Activated naive CD4-positive, alpha-beta T cell treated with anti-CD3 and anti-CD28 coated beads for 36 hours (primary cell): ENCODE measurements at regions of chr14 and their contacts with region 1.

Region 1: DNA sequence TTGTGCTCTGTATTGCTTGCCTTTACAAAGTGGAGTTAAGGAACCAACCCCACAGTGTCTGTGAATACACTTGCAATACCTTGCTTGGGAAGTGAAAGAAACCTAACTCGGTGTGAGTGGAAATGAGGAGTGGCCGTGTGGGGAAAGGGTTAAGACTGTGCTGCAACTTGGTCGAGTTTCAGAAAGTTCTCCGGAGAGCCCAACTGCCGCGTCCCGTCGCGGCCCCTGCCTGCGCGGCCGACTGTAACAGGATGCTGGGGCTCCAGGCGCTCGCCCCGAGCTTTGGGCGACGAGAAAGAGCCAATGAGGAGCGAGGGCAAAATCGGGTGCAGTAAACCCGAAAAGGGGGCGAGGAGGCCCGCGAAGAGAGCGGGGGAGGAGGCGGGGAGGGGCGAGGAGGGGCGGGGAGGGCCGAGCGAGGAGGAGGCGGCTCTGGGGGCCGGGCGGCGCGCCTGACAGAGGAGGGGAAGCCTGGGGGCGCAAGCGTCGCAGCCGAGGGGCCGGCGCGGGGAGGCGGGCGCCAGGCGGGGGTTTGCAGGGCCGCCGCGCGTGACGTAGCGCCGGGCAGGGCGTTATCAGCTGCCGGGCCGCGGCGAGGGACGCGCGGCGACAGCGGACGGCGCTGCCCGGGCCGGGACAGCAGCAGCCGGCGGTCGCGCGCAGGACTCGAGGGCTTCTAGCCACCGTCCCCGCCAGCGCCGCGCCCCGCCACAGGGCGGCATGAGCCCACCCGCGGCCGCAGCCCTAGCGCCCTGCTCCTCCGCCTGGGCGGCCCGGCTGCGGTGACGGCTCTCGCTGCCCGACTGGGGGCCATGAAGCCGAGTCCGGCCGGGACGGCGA is at the start of gene DACT1:
- DNase-seq: peak; percentile 68
- H3K4me3 Mint-ChIP-seq: peak within 1 kb of the TSS; percentile 91
- H3K27ac Mint-ChIP-seq: peak within 1 kb of the TSS; percentile 90
- H3K4me1 Mint-ChIP-seq: peaks cover 48% of the 10 kb centered on the region
- H3K27me3 Mint-ChIP-seq: peaks cover 5% of the 10 kb centered on the region
- total RNA-seq, gene DACT1: 4.0 to 5.2 TPM

Region 2: GRCh38 chr14:58280954-58281787 is 356.4 kb before region 1 on chr14:
- CTCF ChIA-PET with region 1: no interaction called
- intact Hi-C with region 1: loop called (anchors 5 kb)
- DNase-seq: peak; percentile 66
- H3K4me3 Mint-ChIP-seq: peak overlapping the region; percentile 70
- H3K27ac Mint-ChIP-seq: peak overlapping the region; percentile 99
- H3K4me1 Mint-ChIP-seq: peaks cover 68% of the 10 kb centered on the region
- H3K27me3 Mint-ChIP-seq: no peaks in the 10 kb centered on the region

Region 3: GRCh38 chr14:58571769-58572472 is 65.7 kb before region 1 on chr14:
- CTCF ChIA-PET with region 1: interaction called, 12 read pairs
- intact Hi-C with region 1: loop called (anchors 1 kb)
- DNase-seq: peak; percentile 78
- H3K4me3 Mint-ChIP-seq: peak overlapping the region; percentile 61
- H3K27ac Mint-ChIP-seq: peak overlapping the region; percentile 95
- H3K4me1 Mint-ChIP-seq: peaks cover 55% of the 10 kb centered on the region
- H3K27me3 Mint-ChIP-seq: no peaks in the 10 kb centered on the region

Region 4: GRCh38 chr14:58826845-58827686 is 189.5 kb after region 1 on chr14:
- CTCF ChIA-PET with region 1: interaction called, 6 read pairs
- intact Hi-C with region 1: loop called (anchors 5 kb)
- DNase-seq: no peak
- H3K4me3 Mint-ChIP-seq: no peak overlapping the region
- H3K27ac Mint-ChIP-seq: no peak overlapping the region
- H3K4me1 Mint-ChIP-seq: no peaks in the 10 kb centered on the region
- H3K27me3 Mint-ChIP-seq: peaks cover 2% of the 10 kb centered on the region

Region 5: DNA sequence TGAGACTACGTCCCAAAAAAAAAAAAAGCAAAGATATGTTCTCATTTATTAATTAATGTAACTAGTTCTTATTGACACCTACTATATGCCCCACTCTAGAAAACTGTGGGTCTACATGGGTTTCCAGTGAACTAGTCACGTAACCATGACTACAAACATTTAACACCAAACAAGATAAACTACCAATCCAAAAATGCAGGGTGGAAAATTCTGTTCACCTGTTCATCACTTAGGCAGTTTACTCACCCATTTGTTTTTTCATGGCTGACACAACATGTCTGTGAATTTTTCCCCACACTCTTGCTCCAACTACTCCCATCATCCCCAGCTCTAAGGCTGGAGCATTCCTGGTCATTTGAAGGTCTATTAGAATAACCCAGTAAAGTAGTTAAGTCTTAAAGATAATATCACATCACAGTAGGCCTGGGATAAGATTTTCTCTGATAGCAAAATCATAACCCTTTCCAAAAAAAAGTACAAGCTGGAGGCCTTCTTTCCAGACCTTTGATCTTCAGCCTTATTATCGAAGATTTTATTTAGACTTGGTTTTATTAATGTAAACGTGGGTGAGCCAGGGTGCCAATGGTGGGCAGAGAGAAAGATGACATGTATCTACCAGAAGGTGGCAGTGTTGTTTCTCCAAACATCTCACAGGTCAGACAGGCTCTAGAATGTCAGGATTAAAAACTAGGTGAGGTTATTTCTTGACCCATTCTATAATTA is 489.3 kb after region 1 on chr14:
- CTCF ChIA-PET with region 1: no interaction called
- intact Hi-C with region 1: loop called (anchors 1 kb)
- DNase-seq: peak; percentile 24
- H3K4me3 Mint-ChIP-seq: no peak overlapping the region
- H3K27ac Mint-ChIP-seq: no peak overlapping the region
- H3K4me1 Mint-ChIP-seq: no peaks in the 10 kb centered on the region
- H3K27me3 Mint-ChIP-seq: peaks cover 7% of the 10 kb centered on the region

Region 6: DNA sequence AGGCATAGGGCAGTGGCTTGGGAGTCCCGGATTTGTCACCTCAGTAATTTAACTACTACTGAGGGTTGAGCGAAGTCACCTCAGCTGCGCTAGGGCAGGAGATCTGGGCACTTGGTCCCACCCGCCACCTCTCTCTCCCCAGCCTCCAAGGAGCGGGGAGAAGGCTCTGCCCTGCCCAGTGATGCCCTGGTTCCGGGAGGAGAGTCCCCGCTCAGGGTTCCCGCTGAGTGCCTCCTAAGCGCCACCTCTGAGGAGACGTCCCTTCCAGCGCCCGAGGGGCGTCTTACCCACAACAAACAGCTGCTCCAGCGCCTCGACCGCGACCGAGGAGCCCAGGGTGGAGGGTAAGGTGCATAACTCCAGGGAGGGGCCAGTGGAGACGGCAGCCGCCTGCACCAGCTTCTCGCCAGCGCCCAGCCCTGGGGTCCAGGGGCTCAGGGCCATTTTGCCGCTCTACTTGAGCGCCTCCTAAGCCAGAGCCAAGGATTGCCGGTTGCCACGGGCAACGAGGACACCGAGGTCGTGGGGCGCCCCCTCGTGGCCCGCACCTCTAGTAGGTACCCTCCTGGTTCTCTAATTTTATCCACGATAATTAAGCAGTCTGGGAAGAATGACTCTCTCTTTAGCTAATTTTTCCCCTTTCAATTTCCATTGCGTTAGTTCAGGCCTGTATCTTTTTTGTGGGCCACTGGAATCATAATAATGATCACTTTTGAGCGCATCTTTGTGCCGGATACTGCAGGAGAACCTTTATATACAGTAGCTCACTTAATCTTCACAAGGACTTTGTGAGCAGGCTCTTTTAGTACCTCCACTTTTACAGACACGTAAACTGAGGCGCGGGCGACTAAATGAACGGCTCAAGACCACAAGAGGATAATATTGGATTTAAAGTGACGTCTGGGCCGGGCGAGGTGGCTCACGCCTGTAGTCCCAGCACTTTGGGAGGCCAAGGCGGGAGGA is 939.0 kb after region 1 on chr14 and contains the start of gene CCDC175:
- CTCF ChIA-PET with region 1: no interaction called
- intact Hi-C with region 1: loop called (anchors 10 kb)
- DNase-seq: peak; percentile 89
- H3K4me3 Mint-ChIP-seq: peak within 1 kb of the TSS; percentile 65
- H3K27ac Mint-ChIP-seq: no peak within 1 kb of the TSS
- H3K4me1 Mint-ChIP-seq: peaks cover 5% of the 10 kb centered on the region
- H3K27me3 Mint-ChIP-seq: peaks cover 3% of the 10 kb centered on the region
- total RNA-seq, gene CCDC175: not detected